ENCODE measurements at regions of chr2 and their contacts with region 1.

Region 1: GRCh38 chr2:86105252-86105968 is at the start of gene POLR1A:
- DNase-seq: peak; percentile 64 to 96
- ATAC-seq: peak; percentile 96
- H3K4me3 ChIP-seq: peak within 1 kb of the TSS; percentile 82
- H3K27ac ChIP-seq: peak within 1 kb of the TSS; percentile 87 to 88
- H3K4me1 ChIP-seq: peaks cover 26% of the 10 kb centered on the region
- CTCF ChIP-seq: no peak
- EP300 ChIP-seq: no peak
- POLR2A ChIP-seq: peak; percentile 54
- RAD21 ChIP-seq: no peak
- polyA plus RNA-seq, gene POLR1A: 22.8 and 29.4 TPM in 2 replicates

Region 2: DNA sequence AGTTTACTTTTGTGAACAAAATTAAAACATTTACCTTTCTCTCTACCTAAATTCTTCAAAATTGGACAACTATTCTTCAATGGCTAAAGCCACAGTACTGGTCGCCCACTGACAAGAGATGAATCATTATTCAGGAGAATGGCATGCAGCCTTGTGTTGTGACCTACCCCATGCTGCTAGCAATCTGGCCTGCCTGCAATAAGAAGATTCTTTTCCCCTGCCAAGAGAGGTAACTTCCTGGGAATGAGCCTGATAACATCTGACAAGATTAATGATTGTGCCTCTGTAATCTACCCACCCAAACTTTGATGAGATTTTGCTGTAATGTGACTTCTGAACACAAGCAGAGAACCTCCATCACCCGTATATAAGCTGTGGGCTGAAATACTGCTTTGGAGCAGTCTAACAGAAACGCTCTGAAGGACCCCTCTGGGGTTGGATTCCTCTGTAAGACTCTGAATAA is 169.6 kb before region 1 on chr2:
- CTCF ChIA-PET with region 1: no interaction called
- POLR2A ChIA-PET with region 1: no interaction called
- DNase-seq: peak; percentile 87 to 99
- ATAC-seq: peak; percentile 82
- H3K4me3 ChIP-seq: peak overlapping the region; percentile 29
- H3K27ac ChIP-seq: peak overlapping the region; percentile 89 to 99
- H3K4me1 ChIP-seq: peaks cover 68% of the 10 kb centered on the region
- CTCF ChIP-seq: no peak
- EP300 ChIP-seq: peak; percentile 93 to 95; a peak in 4 of 5 replicates
- POLR2A ChIP-seq: no peak
- RAD21 ChIP-seq: peak; percentile 54 to 56

Region 3: DNA sequence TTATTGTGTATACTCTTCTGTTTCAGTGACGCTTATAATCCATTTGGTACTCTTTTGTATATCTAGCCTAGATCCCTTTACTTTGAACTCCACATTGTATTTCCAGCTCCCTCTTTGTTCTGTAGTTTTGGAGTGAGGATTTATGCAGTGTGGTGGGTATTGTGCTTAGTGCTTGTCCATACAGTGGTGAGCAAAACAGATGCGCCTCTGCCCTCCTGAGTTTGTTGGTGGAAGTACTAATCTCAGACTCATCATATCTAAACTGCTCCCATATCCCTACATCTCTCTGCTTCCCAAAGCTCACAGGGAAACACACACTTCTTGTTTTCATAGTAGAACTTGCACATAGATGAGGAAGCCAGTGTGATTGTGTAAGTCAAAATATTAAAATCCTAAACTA is 12.7 kb after region 1 on chr2:
- CTCF ChIA-PET with region 1: interaction called, 12 read pairs
- POLR2A ChIA-PET with region 1: interaction called, 9 read pairs
- DNase-seq: peak in 1 of 2 experiments; percentile 24
- ATAC-seq: peak; percentile 68 to 69; a peak in 4 of 6 replicates
- H3K4me3 ChIP-seq: no peak overlapping the region
- H3K27ac ChIP-seq: no peak overlapping the region
- H3K4me1 ChIP-seq: peaks cover 6% of the 10 kb centered on the region; the same call in 1 of the 3 replicates
- CTCF ChIP-seq: no peak
- EP300 ChIP-seq: no peak
- POLR2A ChIP-seq: no peak
- RAD21 ChIP-seq: 0 out of 5 replicates have a peak, but pooled peaks of 1 of the 2 experiments have one; percentile 9

Region 4: DNA sequence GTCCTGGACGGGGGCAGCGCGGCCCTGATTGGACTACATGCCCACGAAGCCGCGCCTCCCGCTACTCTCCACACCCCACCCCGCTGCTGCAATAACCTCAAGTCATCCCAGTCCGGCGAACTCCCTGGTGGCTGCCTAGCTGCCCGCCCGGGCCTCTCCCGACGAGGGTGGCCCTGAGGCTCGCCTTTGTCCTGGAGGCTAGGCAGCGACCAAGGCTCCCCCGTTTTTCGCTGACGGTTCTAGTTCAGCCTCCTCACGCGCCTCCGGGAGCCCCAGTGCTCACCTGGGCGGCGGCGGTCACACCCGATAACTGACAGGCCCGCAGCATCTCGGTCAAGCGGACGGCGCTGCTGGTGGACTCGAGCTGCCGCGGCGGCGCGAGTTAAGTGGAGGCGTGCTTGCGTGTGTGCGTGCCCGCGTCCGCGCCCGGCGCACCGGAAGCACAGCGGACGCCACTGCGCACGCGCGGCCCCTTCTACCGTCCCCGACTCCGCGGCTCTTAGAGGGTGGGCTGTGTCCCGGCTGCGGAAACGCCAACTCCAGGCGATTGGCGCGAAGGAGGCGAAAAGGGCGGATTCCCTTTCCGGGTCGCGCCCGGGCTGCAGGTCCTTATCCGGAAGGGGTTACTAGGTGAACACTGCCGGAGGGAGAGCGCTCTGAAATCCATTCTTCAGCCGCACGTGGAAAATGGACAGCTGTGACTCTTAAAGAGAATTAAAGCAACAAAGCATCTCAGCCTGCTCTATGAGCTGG is 89.8 kb after region 1 on chr2 and contains the start of gene IMMT:
- CTCF ChIA-PET with region 1: interaction called, 4 read pairs
- POLR2A ChIA-PET with region 1: interaction called, 12 read pairs
- DNase-seq: peak; percentile 93 to 99
- ATAC-seq: peak; percentile 92 to 95
- H3K4me3 ChIP-seq: peak within 1 kb of the TSS; percentile 69
- H3K27ac ChIP-seq: peak within 1 kb of the TSS; percentile 93 to 96
- H3K4me1 ChIP-seq: peaks cover 23% of the 10 kb centered on the region
- CTCF ChIP-seq: no peak
- EP300 ChIP-seq: no peak
- POLR2A ChIP-seq: peak; percentile 89
- RAD21 ChIP-seq: no peak
- polyA plus RNA-seq, gene IMMT: 126 and 157 TPM in 2 replicates